Right ventricle myocardium inferior (tissue), 1 donor: ENCODE measurements at regions of chr9 and their contacts with region 1.

Region 1: DNA sequence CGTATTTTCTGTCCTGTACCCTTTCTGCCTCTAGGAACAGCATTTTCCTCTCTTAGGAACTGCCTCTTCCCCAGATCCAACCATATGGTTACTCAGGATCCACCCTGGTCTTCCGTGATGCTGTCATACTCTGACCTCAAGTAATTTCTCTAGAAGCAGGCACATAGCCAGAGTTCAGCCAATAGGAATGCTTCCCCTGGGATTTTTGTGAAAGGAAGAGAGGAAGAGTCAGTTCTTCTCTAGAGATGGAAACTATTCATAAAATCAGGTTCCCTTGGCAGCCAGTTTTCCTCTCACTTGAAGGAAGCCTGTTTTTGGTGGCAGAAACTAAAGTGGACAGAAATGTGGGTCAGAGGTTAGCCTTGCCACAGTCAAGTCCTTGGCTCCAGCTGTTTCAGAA is 400.1 kb upstream of the PCSK5 start:
- DNase-seq: no peak
- ATAC-seq: peak; percentile 82

Region 2: DNA sequence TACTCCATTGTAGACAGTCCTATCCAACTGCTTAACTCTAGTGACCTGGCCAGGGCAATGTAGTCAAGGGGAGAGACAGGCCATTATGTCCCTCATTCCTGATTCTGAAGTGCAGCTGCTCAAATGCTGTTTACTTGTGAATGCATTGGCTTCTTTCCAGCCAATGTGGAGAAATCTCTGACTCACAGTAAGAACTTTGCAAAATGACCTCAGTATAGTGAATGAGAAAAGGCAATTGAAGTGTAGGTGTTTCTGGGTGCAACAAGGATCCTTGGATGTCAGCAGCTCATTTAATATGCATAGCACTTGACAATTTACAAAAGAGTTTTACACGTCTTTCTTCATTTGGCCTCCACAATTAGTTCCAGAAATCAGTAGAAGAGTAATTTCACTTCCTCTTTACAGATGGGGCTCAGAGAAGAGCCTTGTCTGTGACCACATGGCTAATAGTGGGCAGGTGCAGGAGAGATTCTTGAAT is 34.8 kb before region 1 on chr9:
- intact Hi-C with region 1: loop called (anchors 5 kb)
- DNase-seq: no peak
- ATAC-seq: peak; percentile 46

Region 3: GRCh38 chr9:75504721-75505120 is 14.4 kb after region 1 on chr9:
- intact Hi-C with region 1: no loop called
- DNase-seq: no peak
- ATAC-seq: no peak

Region 4: DNA sequence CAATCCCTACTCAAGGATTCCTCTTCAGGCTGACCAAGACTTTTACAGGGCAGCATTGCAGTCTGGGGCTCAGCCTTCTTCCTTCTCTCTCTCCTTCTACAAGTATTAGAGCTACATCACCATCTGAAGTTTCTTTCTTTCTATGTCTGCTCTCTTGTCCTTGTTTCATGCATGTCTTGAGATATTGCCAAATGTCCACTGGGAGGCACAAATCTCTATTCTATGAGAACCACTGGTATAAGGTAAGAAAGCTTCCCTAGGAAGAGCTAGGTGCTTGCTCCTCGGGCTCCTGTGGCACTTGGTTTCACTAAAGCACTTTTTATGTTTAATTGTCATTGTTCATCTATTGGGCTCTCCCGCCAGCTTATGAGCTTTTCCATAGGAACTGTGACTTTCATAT is 111.0 kb after region 1 on chr9:
- intact Hi-C with region 1: no loop called
- DNase-seq: no peak
- ATAC-seq: no peak